ENCODE measurements at regions of chr3 and their contacts with region 1.

Region 1: DNA sequence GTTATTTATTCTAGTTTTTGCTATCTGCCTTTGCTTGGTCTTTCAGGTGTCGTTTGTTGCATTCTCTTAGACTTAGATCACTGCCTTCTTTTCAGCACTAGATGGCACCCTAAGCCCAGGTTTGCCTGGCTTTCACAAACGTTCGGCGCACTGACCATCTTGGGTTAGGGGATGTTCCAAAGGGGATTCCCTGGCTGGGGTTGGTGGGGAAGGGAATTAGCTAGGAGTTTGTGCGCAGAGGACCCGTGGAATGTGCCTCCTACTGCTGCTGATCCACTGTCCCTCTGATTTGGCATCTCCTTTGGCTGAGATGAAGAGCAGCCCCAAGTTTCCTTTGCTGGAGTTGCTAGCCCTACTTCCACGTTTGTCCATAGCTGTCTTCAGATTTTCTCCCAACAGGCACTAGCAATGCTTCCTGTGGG is 33.9 kb downstream of the PFN2 start:
- DNase-seq: no peak
- H3K4me3 ChIP-seq: no peak overlapping the region
- H3K27me3 ChIP-seq: no peaks in the 10 kb centered on the region
- CTCF ChIP-seq: peak; percentile 84

Region 2: DNA sequence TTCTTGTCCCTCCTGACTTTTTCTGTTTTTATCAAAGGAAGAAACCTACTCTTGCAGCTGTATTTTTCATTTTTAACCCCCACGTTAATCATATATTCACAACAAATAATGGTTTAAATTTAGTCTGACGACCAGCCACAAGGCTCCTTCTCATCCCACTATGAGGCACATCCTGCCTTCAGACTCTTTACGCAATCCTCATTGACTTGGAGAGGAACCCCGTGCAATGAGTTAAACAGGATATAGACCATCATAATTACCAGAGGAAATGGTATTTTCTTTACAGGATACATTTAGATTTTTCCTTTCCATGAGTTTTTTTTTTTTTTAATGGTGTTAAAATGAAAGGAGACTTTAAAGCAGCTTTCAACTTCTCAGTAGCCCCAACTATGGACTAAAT is 347.5 kb before region 1 on chr3:
- CTCF ChIA-PET with region 1: no interaction called
- POLR2A ChIA-PET with region 1: no interaction called
- DNase-seq: no peak
- H3K4me3 ChIP-seq: no peak overlapping the region
- H3K27me3 ChIP-seq: no peaks in the 10 kb centered on the region
- CTCF ChIP-seq: no peak

Region 3: DNA sequence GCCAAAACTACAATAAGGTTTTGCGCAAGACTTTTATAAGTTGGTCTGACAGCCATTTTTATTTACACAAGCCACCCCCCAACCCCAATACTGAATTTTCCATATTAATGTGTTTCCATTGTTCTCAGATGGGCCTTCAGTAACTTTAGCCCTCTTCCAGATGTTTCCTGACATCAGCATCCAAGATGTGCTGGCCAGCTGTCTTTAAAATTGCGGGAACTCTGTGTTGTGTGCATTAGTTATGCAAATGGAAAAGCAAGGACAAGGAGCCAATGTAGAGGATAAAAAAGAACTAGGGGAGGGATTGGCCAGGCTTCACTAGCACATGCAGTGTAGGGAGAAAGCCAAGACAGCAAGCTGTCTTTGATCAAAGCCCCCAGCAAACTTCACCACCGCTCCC is 229.9 kb before region 1 on chr3:
- CTCF ChIA-PET with region 1: no interaction called
- POLR2A ChIA-PET with region 1: no interaction called
- DNase-seq: no peak
- H3K4me3 ChIP-seq: no peak overlapping the region
- H3K27me3 ChIP-seq: no peaks in the 10 kb centered on the region
- CTCF ChIP-seq: no peak

Region 4: GRCh38 chr3:149879872-149880271 is 57.0 kb before region 1 on chr3:
- CTCF ChIA-PET with region 1: interaction called, 10 read pairs
- POLR2A ChIA-PET with region 1: no interaction called
- DNase-seq: peak; percentile 19
- H3K4me3 ChIP-seq: no peak overlapping the region
- H3K27me3 ChIP-seq: no peaks in the 10 kb centered on the region
- CTCF ChIP-seq: peak; percentile 67

Region 5: GRCh38 chr3:149949181-149949580 is 12.4 kb after region 1 on chr3:
- CTCF ChIA-PET with region 1: interaction called, 13 read pairs
- POLR2A ChIA-PET with region 1: no interaction called
- DNase-seq: no peak
- H3K4me3 ChIP-seq: no peak overlapping the region
- H3K27me3 ChIP-seq: no peaks in the 10 kb centered on the region
- CTCF ChIP-seq: no peak

Region 6: DNA sequence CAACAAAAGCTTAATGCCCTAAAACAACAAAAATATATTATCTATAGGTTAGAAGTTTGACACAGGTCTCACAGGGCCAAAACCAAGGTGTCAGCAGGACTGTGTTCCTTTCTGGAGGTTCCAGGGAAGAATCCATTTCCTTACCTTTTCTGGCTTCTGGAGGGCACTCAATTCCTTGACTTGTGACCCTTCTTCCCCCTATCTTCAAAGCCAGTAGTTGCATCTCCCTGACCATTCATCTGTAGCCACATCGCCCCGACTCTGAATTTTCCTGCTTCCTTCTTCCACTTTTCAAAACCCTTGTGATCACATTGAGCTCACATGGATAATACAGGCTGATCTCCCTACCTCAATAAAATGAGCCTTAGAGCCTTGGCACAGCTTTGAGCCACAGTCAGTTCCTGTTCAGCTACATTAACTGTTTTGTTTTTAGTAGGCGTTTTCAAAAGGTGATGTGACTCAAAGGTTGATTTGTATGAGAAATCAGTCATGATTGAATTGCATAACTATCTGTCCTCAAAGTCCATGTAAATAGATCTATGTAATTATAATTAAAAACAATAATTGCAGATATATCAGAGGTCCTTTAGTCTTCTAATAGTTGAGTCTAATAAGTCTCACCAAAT is 21.5 kb after region 1 on chr3:
- CTCF ChIA-PET with region 1: interaction called, 11 read pairs
- POLR2A ChIA-PET with region 1: no interaction called
- DNase-seq: no peak
- H3K4me3 ChIP-seq: no peak overlapping the region
- H3K27me3 ChIP-seq: no peaks in the 10 kb centered on the region
- CTCF ChIP-seq: no peak

Region 7: GRCh38 chr3:149967086-149967685 is 30.4 kb after region 1 on chr3:
- CTCF ChIA-PET with region 1: interaction called, 10 read pairs
- POLR2A ChIA-PET with region 1: no interaction called
- DNase-seq: no peak
- H3K4me3 ChIP-seq: no peak overlapping the region
- H3K27me3 ChIP-seq: no peaks in the 10 kb centered on the region
- CTCF ChIP-seq: peak; percentile 45

Region 8: DNA sequence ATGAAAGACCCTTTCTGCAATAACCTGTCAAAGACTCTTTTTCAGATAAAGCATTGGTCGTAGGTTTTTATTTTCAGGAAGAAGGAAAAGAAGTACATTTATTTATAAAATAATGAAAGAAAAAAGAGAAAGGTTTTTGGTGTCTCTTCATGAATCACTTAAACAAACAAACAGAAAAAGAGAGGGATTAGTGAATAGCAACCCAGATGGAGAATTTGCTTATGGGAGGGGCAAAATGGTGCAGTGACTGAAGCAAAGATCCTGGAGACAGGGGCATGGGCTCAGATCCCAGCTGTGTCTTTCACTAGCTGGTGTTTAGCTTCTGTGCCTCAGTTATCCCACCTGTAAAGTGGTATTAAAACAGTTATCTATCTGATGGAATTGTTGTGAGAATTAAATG is 112.5 kb after region 1 on chr3:
- CTCF ChIA-PET with region 1: no interaction called
- POLR2A ChIA-PET with region 1: no interaction called
- DNase-seq: no peak
- H3K4me3 ChIP-seq: no peak overlapping the region
- H3K27me3 ChIP-seq: no peaks in the 10 kb centered on the region
- CTCF ChIP-seq: no peak

Region 9: DNA sequence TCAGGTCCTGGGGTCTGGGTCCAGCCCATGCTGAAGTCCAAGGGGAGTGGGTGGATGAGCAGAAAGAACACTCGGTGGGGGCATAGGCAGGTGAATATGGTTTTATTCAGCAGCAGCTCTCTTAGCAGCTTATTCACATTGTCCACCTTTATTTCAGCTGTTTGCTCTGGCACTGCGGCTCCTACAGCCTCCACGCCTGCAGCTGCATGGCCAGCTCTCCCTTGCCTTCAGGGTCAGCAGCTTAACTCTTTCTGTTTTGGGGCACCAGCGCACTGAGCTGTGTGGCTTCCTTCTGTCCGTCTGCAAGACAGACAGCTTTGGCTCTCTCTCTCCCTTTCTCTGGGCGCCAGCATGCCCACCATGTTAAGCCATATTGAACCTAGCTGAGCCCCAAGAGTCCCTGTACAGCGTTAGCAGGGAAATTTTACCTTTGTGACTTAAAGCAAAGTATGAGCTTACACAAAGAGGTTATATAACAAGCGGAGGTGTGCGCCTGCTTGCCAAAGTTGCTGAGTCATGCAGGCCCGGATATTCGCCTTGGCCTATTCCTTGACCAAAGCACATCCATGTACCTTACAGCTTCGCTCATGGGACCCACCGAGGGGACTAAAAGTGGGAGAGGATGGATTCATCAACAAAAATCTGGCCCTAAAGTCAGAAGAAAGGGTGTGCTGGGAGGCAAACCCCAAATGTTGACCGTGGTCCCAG is 203.9 kb after region 1 on chr3:
- CTCF ChIA-PET with region 1: no interaction called
- POLR2A ChIA-PET with region 1: no interaction called
- DNase-seq: no peak
- H3K4me3 ChIP-seq: no peak overlapping the region
- H3K27me3 ChIP-seq: no peaks in the 10 kb centered on the region
- CTCF ChIP-seq: no peak

Region 10: GRCh38 chr3:150183678-150184425 is 247.0 kb after region 1 on chr3:
- CTCF ChIA-PET with region 1: interaction called, 28 read pairs
- POLR2A ChIA-PET with region 1: no interaction called
- DNase-seq: no peak
- H3K4me3 ChIP-seq: peak overlapping the region; percentile 34
- H3K27me3 ChIP-seq: no peaks in the 10 kb centered on the region
- CTCF ChIP-seq: peak; percentile 77

Region 11: GRCh38 chr3:150216041-150216811 is 279.4 kb after region 1 on chr3:
- CTCF ChIA-PET with region 1: interaction called, 29 read pairs
- POLR2A ChIA-PET with region 1: no interaction called
- DNase-seq: no peak
- H3K4me3 ChIP-seq: no peak overlapping the region
- H3K27me3 ChIP-seq: no peaks in the 10 kb centered on the region
- CTCF ChIP-seq: peak; percentile 25